ENCODE measurements at regions of chr15 and their contacts with region 1.

Region 1: DNA sequence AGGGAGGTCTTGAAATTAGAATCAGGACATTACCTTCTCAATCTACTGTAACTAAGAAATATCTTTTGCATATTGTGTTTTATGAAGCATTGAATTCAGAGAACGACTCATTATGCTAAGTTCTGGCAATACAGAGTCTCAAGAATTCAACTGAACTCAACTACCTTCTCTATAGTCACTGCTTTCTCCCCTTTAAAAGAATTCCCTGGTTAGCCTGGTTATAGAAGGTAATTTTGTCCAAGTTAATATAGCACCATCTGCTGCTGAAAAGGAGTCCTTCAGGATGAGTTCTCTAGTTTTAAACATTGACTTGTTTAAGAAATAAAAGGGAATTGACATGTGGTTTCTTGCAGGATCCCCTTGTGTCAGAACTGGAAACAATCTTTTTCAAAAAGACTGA is 60.2 kb downstream of the IL16 start:
- DNase-seq: peak; percentile 73
- ATAC-seq: peak; percentile 81
- H3K4me3 ChIP-seq: no peak overlapping the region
- H3K27ac ChIP-seq: no peak overlapping the region
- H3K4me1 ChIP-seq: peaks cover 13% of the 10 kb centered on the region
- H3K27me3 ChIP-seq: no peaks in the 10 kb centered on the region
- CTCF ChIP-seq: peak; percentile 74
- POLR2A ChIP-seq: no peak
- RAD21 ChIP-seq: peak; percentile 72

Region 2: GRCh38 chr15:81106560-81106959 is 150.4 kb before region 1 on chr15:
- CTCF ChIA-PET with region 1: interaction called, 3 read pairs
- POLR2A ChIA-PET with region 1: no interaction called
- dilution Hi-C with region 1: no loop called
- in situ Hi-C with region 1: no loop called
- intact Hi-C with region 1: loop called (anchors 2 kb)
- DNase-seq: peak; percentile 87
- ATAC-seq: peak; percentile 96
- H3K4me3 ChIP-seq: no peak overlapping the region
- H3K27ac ChIP-seq: no peak overlapping the region
- H3K4me1 ChIP-seq: 0 out of 2 replicates have a peak, but pooled peaks cover 3% of the 10 kb centered on the region
- H3K27me3 ChIP-seq: no peaks in the 10 kb centered on the region
- CTCF ChIP-seq: peak; percentile 90
- POLR2A ChIP-seq: no peak
- RAD21 ChIP-seq: peak; percentile 88

Region 3: DNA sequence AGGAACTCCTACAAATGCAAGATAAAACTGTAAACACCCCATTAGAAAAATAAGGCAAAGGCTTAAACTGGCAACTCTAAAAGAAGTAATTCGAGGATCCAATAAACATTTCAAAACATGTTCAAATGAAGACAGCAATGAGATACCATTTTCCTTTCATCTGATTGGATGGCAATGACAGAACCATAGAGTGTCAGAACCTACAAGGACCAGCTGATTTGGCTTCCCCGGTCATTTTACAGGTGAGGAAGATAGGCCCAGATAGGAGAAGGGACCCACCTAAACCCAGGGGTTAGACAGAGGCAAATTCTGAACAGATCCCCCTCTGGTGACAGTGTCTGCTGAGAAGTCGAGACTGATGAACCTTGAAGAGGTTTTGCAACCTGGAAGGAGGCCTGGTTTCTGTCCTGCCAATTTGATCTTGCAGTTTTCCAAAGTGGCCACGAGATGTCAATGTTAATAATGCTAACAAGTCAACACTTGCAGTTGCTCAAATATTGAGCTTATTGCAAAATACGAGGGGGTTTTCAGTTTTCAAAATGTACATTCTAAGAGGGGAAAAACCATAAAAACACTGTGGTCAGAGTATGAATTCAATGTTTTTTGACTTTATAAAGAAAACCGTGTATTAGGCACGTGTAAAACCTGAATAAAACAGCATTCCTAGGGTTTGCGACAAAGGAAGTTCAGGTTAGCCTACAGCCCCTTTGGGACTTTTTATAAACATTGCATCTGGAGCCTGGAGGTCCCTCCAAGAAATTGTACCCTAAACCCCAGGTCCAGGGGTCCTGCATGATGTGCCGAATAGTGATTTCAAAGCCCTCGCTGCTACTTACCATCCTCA is 101.3 kb before region 1 on chr15:
- CTCF ChIA-PET with region 1: no interaction called
- POLR2A ChIA-PET with region 1: no interaction called
- dilution Hi-C with region 1: no loop called
- in situ Hi-C with region 1: no loop called
- intact Hi-C with region 1: loop called (anchors 1 kb)
- DNase-seq: peak; percentile 77
- ATAC-seq: peak; percentile 64
- H3K4me3 ChIP-seq: no peak overlapping the region
- H3K27ac ChIP-seq: peak overlapping the region; percentile 21; the same call in 1 of the 2 replicates
- H3K4me1 ChIP-seq: peaks cover 19% of the 10 kb centered on the region
- H3K27me3 ChIP-seq: no peaks in the 10 kb centered on the region
- CTCF ChIP-seq: peak; percentile 80
- POLR2A ChIP-seq: no peak
- RAD21 ChIP-seq: peak; percentile 86

Region 4: GRCh38 chr15:81189583-81190283 is 67.2 kb before region 1 on chr15:
- CTCF ChIA-PET with region 1: no interaction called
- POLR2A ChIA-PET with region 1: interaction called, 3 read pairs
- dilution Hi-C with region 1: no loop called
- in situ Hi-C with region 1: no loop called
- intact Hi-C with region 1: loop called (anchors 2 kb)
- DNase-seq: peak; percentile 99
- ATAC-seq: peak; percentile 87
- H3K4me3 ChIP-seq: no peak overlapping the region
- H3K27ac ChIP-seq: peak overlapping the region; percentile 96
- H3K4me1 ChIP-seq: peaks cover 25% of the 10 kb centered on the region
- H3K27me3 ChIP-seq: no peaks in the 10 kb centered on the region
- CTCF ChIP-seq: no peak
- POLR2A ChIP-seq: no peak; the same call in 1 of the 2 replicates
- RAD21 ChIP-seq: 0 out of 2 replicates have a peak, but pooled peaks have one; percentile 4

Region 5: DNA sequence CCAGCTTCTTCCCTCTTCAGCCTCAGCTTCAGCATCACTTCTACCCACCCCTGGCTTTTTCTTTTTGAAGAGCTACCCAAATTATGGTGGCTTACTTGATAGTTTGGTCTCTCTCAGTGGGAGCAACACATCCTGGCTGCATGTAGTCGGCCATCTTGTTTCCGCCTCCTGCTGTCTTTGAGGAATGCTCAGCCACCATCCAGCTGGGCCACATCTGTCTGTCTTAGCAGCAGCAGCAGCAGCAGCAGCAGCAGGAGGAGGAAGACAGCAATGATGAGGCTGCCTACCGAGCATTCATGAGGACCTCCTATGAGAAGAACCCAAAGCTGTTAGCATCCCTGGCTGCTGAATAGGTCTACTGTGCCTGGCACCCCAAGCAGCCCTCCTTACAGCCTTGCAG is 40.5 kb before region 1 on chr15:
- CTCF ChIA-PET with region 1: no interaction called
- POLR2A ChIA-PET with region 1: no interaction called
- dilution Hi-C with region 1: no loop called
- in situ Hi-C with region 1: no loop called
- intact Hi-C with region 1: loop called (anchors 5 kb)
- DNase-seq: no peak
- ATAC-seq: no peak; the same call in 1 of the 2 replicates
- H3K4me3 ChIP-seq: no peak overlapping the region
- H3K27ac ChIP-seq: no peak overlapping the region
- H3K4me1 ChIP-seq: peaks cover 4% of the 10 kb centered on the region; the same call in 1 of the 2 replicates
- H3K27me3 ChIP-seq: no peaks in the 10 kb centered on the region
- CTCF ChIP-seq: no peak
- POLR2A ChIP-seq: no peak
- RAD21 ChIP-seq: no peak

Region 6: GRCh38 chr15:81274931-81275707 is 18.2 kb after region 1 on chr15:
- CTCF ChIA-PET with region 1: no interaction called
- POLR2A ChIA-PET with region 1: no interaction called
- dilution Hi-C with region 1: no loop called
- in situ Hi-C with region 1: no loop called
- intact Hi-C with region 1: no loop called
- DNase-seq: peak; percentile 86
- ATAC-seq: peak; percentile 91
- H3K4me3 ChIP-seq: no peak overlapping the region
- H3K27ac ChIP-seq: no peak overlapping the region; the same call in 1 of the 2 replicates
- H3K4me1 ChIP-seq: peaks cover 9% of the 10 kb centered on the region
- H3K27me3 ChIP-seq: no peaks in the 10 kb centered on the region
- CTCF ChIP-seq: peak; percentile 92
- POLR2A ChIP-seq: no peak
- RAD21 ChIP-seq: peak; percentile 98